Head of caudate nucleus (tissue), 42 donors: ENCODE measurements at regions of chr4 and their contacts with region 1.

Region 1: DNA sequence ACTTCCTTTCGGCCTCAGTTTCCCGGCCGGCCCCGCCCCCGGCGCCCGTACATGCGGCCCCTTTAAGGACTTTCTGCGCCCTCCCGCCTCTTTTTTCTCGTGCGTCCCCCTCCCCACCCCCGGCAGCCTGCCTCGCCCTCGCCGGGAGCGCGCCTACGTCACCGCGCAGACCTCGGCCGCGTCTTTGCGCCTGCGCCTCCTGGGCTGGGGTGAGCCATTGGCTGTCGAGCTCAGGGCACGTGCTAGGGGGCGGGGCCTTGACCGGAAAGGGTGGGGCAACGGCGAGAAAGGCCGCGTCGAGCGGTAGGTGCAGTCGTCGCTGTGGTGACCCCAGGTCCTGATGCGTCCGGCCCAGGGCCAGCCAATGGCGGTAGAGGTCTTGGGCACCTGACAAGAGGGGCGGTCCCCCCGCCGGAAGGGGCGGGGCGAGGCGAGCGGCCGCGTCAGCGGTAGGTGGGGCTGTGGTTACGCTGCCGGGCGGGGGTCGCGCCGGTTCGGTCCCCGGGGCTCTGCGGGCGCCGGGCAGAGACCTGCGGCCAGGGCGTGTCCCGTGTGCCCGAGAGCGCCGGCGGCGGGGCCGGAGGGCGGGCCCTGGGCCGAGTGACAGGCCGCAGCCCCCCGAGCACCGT is at the start of gene UVSSA:
- DNase-seq: peak; percentile 99 to 100 (median 100)

Region 2: DNA sequence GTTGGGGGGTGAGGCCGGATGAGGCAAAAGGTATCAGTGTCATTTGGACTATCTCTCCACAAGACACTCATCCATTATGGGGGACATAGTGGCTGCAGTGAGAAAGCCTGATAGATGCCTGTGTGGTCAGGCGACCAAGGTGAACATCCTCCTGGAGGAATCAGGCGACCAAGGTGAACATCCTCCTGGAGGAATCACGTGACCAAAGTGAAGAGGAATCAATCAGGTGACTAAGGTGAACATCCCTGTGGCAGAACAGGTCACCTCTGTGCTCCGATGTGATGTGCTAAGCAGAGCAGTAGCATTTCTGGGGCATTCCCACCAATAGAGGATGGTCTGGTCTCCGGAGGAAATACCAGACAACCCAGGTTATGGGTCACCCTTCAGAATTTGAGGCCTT is 277.5 kb before region 1 on chr4:
- intact Hi-C with region 1: no loop called
- DNase-seq: no peak

Region 3: GRCh38 chr4:1126506-1126905 is 220.4 kb before region 1 on chr4:
- intact Hi-C with region 1: loop called (anchors 10 kb)
- DNase-seq: no peak

Region 4: DNA sequence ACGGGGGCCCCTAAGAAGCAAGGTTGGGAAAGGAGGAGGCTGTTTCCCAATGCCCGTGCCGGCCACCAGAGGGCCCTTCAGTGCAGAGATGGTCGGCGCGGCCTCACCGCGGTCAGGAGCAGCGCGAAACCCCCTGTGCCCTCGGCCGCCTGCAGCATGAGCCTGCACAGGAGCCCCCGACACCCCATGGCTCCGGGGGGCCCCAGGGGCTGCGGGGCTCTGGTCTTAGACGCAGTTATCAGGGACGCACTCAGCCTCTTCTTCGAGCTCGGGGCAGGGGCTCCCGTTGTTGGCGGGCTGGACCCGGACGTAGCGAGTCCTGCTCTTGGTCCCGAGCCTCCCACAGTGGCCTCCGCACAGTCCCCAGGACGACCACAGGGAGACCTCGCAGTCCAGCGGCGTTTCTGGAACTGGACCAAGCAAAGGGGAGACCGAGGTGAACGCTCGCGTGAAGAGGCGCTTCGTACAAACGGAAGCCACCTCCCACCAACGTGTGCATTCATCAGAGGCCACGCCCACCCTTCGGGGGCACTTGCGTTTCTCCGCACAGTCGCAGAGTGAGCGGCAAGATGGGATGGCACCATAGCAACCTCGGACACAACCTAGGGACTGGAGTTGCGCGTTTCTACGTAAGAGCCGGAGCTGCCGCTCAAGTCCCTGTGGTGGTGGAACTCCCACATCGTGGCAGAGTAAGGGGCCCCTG is 179.5 kb before region 1 on chr4:
- intact Hi-C with region 1: loop called (anchors 10 kb)
- DNase-seq: peak; percentile 58 to 92 (median 82)

Region 5: GRCh38 chr4:1249148-1249730 is 97.7 kb before region 1 on chr4:
- intact Hi-C with region 1: loop called (anchors 1 kb)
- DNase-seq: peak; percentile 40 to 95 (median 90)

Region 6: GRCh38 chr4:1289207-1290164 is 57.4 kb before region 1 on chr4 and contains the start of gene MAEA:
- intact Hi-C with region 1: loop called (anchors 2 kb)
- DNase-seq: peak; percentile 94 to 99 (median 98)